ENCODE measurements at regions of chr16 and their contacts with region 1.

Region 1: DNA sequence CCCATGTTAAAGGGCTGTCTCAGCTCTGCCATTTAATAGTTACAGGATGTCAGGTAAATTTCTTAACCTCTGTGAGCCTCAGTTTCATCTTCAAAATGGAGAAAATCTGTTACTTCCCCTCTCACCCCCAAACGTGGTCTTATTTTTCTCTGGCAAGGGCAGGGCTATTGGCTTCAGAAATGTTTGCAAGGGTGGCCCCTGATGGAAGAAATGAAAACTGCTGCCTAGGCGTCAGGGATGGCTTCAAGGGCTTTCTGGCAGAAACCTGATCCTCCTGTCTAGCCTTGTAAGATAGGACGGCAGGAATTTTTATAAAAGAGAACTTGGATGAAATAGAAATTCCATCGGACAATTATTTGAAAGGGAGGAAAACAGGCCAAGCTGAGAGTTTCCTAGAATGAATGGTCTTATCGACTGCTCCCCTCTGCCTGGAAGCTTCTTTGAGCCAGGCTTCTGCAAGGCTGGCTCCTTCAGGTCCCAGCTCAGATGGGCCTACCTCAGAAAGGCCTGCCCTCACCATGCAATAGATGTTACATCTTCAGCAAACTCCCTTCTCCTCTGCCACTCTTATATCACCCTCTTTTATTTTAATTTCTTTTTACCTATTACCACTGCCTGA is 43.0 kb upstream of the TANGO6 start:
- DNase-seq: peak; percentile 80
- H3K4me3 ChIP-seq: no peak overlapping the region
- H3K27ac ChIP-seq: peak overlapping the region; percentile 47
- H3K4me1 ChIP-seq: peaks cover 39% of the 10 kb centered on the region
- H3K27me3 ChIP-seq: no peaks in the 10 kb centered on the region
- CTCF ChIP-seq: peak; percentile 83 to 89

Region 2: DNA sequence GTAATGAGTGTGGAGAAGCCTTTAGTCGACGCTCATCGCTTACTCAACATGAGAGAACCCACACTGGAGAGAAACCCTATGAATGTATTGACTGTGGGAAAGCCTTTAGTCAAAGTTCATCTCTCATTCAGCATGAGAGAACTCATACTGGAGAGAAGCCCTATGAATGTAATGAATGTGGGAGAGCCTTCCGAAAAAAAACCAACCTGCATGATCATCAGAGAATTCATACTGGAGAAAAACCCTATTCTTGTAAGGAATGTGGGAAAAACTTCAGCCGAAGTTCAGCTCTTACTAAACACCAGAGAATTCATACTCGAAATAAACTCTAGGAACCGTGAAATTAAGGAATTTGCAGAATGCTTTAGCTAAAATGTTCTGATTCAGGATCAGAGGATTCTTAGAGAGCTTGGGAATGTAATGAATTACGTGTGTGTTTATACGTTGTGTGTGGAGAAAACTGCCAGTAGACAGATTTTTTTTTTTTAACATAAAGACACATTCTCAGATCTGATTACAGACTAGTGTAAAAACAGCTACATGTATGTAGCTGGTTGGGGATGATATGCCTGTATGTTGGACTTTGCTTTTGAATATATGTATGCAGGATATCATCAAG is 235.9 kb before region 1 on chr16:
- CTCF ChIA-PET with region 1: no interaction called
- dilution Hi-C with region 1: no loop called
- in situ Hi-C with region 1: loop called in 1 of 2 experiments (anchors 25 kb)
- intact Hi-C with region 1: no loop called
- DNase-seq: no peak
- H3K4me3 ChIP-seq: no peak overlapping the region
- H3K27ac ChIP-seq: no peak overlapping the region
- H3K4me1 ChIP-seq: no peaks in the 10 kb centered on the region
- H3K27me3 ChIP-seq: no peaks in the 10 kb centered on the region
- CTCF ChIP-seq: no peak

Region 3: DNA sequence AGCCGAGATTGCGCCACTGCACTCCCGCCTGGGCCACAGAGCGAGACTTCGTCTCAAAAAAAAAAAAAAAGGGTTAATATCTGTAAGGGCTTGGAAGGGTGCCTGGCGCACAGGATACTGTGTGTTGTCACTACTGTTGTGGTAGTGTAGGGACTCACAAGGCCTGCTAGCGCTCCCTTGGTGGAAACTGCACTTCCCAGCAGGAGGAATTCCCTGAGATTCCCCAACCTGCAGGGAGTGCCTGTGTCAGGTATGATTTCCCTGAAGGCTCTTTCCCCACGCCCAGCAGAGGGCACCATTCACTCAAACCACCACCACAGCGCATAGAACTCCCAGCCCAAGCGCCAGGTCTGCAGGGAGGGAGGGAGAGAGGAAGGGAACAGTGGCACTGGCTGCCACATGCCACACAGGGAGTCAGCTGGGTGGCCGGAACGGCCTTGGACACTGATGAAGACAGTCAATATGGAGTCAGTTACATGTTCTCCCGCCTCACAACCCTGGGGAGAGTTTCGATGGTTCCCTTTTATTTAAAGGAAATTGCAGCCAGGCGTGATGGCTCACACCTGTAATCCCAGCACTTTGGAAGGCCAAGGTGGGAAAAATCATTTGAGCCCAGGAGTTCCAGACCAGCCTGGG is 96.0 kb before region 1 on chr16:
- CTCF ChIA-PET with region 1: no interaction called
- dilution Hi-C with region 1: no loop called
- in situ Hi-C with region 1: loop called (anchors 5 to 10 kb)
- intact Hi-C with region 1: loop called (anchors 1 kb)
- DNase-seq: peak; percentile 83
- H3K4me3 ChIP-seq: no peak overlapping the region
- H3K27ac ChIP-seq: no peak overlapping the region
- H3K4me1 ChIP-seq: peaks cover 22% of the 10 kb centered on the region
- H3K27me3 ChIP-seq: no peaks in the 10 kb centered on the region
- CTCF ChIP-seq: peak; percentile 84 to 92

Region 4: DNA sequence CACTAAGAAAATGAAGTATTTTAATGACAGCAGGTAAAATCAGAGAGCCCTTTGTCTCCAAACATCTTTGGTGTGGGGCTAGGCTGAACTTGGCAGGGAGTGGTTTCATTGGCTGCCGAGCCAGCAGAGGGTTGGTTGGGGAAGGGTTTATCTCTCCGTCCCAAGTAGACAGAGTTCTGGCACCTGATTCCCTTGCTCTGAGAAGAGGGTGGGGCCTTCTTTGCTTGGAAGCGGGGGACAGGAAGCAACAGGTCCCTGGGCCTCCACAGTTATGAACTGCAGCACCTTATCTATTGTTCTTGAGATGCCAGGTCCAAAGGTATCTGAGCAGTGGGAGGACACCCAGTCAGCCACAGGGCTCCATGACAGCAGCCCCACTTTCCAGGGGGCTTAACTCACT is 75.6 kb before region 1 on chr16:
- CTCF ChIA-PET with region 1: interaction called, 33 read pairs
- dilution Hi-C with region 1: loop called (anchors 5 kb)
- in situ Hi-C with region 1: no loop called
- intact Hi-C with region 1: no loop called
- DNase-seq: no peak
- H3K4me3 ChIP-seq: no peak overlapping the region
- H3K27ac ChIP-seq: no peak overlapping the region
- H3K4me1 ChIP-seq: peaks cover 7% of the 10 kb centered on the region
- H3K27me3 ChIP-seq: no peaks in the 10 kb centered on the region
- CTCF ChIP-seq: no peak

Region 5: GRCh38 chr16:68744369-68745280 is 55.7 kb before region 1 on chr16:
- CTCF ChIA-PET with region 1: no interaction called
- dilution Hi-C with region 1: no loop called
- in situ Hi-C with region 1: loop called in 1 of 2 experiments (anchors 5 kb)
- intact Hi-C with region 1: loop called (anchors 2 kb)
- DNase-seq: peak; percentile 94
- H3K4me3 ChIP-seq: peak overlapping the region in 2 of 3 experiments; percentile 1 to 35
- H3K27ac ChIP-seq: peak overlapping the region; percentile 64
- H3K4me1 ChIP-seq: peaks cover 70% of the 10 kb centered on the region
- H3K27me3 ChIP-seq: no peaks in the 10 kb centered on the region
- CTCF ChIP-seq: no peak

Region 6: GRCh38 chr16:68873635-68874471 is 73.5 kb after region 1 on chr16:
- CTCF ChIA-PET with region 1: no interaction called
- dilution Hi-C with region 1: no loop called
- in situ Hi-C with region 1: no loop called
- intact Hi-C with region 1: no loop called
- DNase-seq: no peak
- H3K4me3 ChIP-seq: no peak overlapping the region
- H3K27ac ChIP-seq: no peak overlapping the region
- H3K4me1 ChIP-seq: no peaks in the 10 kb centered on the region
- H3K27me3 ChIP-seq: no peaks in the 10 kb centered on the region
- CTCF ChIP-seq: no peak

Region 7: DNA sequence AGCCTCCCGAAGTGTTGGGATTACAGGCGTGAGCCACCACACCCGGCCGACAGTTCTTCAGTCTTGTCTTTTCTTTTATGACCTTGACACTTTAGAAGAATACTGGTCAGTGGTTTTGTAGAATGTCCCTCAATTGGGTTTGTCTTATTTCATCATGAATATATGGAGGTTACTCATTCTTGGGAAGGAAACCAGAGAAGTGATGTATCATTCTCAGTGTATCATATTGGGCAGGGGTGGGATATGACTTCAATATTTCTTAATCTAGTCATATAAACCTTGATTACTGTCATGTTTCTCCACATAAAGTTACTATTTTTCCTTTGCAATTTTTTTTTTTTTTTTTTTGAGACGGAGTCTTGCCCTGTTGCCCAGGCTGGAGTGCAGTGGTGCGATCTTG is 423.5 kb after region 1 on chr16:
- CTCF ChIA-PET with region 1: no interaction called
- dilution Hi-C with region 1: no loop called
- in situ Hi-C with region 1: no loop called
- intact Hi-C with region 1: no loop called
- DNase-seq: peak; percentile 27
- H3K4me3 ChIP-seq: no peak overlapping the region
- H3K27ac ChIP-seq: no peak overlapping the region
- H3K4me1 ChIP-seq: peaks cover 10% of the 10 kb centered on the region
- H3K27me3 ChIP-seq: no peaks in the 10 kb centered on the region
- CTCF ChIP-seq: no peak